AG04449 (cell line): ENCODE measurements at regions of chr2 and their contacts with region 1.

Region 1: GRCh38 chr2:72973566-72974435 is 56.5 kb downstream of the EMX1 start:
- DNase-seq: no peak
- H3K4me3 ChIP-seq: no peak overlapping the region
- CTCF ChIP-seq: peak; percentile 91

Region 2: GRCh38 chr2:72934683-72935610 is 38.9 kb before region 1 on chr2:
- CTCF ChIA-PET with region 1: interaction called, 19 read pairs
- POLR2A ChIA-PET with region 1: no interaction called
- DNase-seq: no peak
- H3K4me3 ChIP-seq: no peak overlapping the region
- CTCF ChIP-seq: no peak

Region 3: GRCh38 chr2:72953976-72954375 is 19.8 kb before region 1 on chr2:
- CTCF ChIA-PET with region 1: interaction called, 26 read pairs
- POLR2A ChIA-PET with region 1: no interaction called
- DNase-seq: no peak
- H3K4me3 ChIP-seq: no peak overlapping the region
- CTCF ChIP-seq: no peak

Region 4: GRCh38 chr2:72993147-72993932 is 19.5 kb after region 1 on chr2:
- CTCF ChIA-PET with region 1: interaction called, 30 read pairs
- POLR2A ChIA-PET with region 1: no interaction called
- DNase-seq: no peak
- H3K4me3 ChIP-seq: no peak overlapping the region
- CTCF ChIP-seq: peak; percentile 66

Region 5: DNA sequence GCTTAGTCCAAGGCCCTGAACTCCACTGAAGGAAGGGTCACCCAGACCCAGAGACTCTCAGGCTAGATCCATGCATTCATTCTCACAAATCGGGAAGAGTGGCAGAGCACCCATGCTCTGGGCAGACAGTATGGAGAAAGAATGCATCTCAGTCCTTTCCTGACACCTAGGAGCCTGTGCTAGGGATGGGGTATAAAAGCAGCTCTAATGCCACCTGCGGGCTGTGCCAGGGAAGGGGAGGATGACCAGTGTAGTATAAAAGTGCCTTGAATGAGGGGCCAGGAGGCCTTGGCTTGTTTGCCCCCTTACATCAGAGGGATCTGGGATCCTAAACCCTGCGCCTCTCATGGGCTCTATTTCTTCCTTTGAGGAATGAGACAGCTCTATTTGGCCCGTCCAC is 104.1 kb after region 1 on chr2:
- CTCF ChIA-PET with region 1: interaction called, 13 read pairs
- POLR2A ChIA-PET with region 1: no interaction called
- DNase-seq: no peak
- H3K4me3 ChIP-seq: no peak overlapping the region
- CTCF ChIP-seq: no peak

Region 6: DNA sequence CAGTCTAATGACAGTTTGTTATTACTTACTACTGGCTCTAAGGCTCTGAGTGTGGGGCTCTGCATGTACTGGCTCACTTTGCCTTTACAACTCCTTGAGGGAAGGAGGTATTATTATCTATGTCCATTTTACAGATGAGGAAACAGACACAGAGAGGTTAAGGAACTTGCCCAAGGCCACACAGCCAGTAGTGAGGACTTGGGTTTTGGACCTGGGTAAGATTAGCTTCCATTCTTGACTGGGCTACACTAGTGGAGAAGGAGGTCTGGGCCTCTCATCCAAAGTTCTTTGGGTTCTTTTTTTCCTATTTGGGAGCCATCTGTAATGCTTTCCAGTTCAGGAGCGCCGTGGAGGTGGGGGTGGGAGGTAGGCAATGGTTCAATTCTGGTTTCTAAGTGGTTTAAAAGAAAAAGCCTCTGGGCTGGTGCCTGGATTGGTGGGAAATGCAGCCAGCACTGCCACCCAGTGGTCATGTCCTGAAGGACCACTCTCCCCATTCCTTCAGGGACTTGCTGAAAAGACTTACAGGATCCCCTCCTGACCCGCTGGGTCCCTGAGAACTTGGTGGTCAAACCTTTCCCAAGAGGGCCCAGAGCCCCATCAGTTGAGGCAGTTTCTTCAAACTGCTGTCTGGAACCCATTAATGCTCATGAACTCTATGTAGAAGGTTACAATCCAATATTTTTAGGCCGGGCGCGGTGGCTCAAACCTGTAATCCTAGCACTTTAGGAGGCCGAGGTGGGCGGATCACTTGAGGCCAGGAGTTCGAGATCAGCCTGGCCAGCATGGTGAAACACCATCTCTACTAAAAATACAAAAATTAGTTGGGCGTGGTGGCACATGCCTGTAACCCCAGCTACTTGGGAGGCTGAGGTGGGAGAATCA is 189.9 kb after region 1 on chr2:
- CTCF ChIA-PET with region 1: interaction called, 20 read pairs
- POLR2A ChIA-PET with region 1: no interaction called
- DNase-seq: no peak
- H3K4me3 ChIP-seq: no peak overlapping the region
- CTCF ChIP-seq: peak; percentile 87